ENCODE measurements at regions of chr14 and their contacts with region 1.

Region 1: DNA sequence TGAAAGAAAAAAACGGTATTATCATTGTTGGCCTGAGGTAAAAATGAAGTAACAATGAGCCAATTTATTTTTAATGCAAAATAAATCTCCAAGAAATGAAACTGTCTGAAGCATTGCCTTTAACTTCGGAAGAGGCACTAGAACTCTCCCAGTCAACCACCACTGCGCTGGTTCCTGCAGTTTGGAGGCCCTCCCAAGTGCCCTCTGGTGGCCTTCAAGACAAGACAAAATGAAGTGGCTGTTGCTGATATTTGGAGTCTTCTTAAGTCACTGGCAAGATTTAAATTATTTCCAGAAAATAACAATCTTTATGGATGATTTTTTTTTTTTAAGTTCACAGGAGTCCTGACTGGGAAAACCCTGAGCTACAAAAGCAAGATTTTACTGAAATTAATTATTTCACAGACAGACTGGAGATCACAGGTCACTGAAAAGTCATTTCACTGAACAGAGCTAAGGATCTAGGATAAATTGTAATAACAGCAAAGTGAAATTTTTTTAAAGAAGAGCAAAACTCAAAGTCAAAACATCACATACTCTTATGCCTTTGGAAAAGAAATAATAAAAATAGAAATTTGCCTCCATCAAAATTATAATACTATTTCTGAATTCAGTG is 58.2 kb downstream of the DICER1 start:
- DNase-seq: peak; percentile 61 to 67
- ATAC-seq: peak; percentile 91

Region 2: GRCh38 chr14:94691660-94692034 is 407.4 kb before region 1 on chr14:
- intact Hi-C with region 1: loop called in 1 of 2 experiments (anchors 5 kb)
- DNase-seq: no peak
- ATAC-seq: no peak

Measured in left colon (tissue), 2 donors.